BJ (cell line): ENCODE measurements at regions of chrX and their contacts with region 1.

Region 1: GRCh38 chrX:66728818-66729271 is 90.0 kb upstream of the EDA2R start:
- DNase-seq: peak; percentile 11
- H3K4me3 ChIP-seq: peak overlapping the region; percentile 55
- H3K27me3 ChIP-seq: no peaks in the 10 kb centered on the region
- CTCF ChIP-seq: peak; percentile 74

Region 2: GRCh38 chrX:66200855-66201795 is 527.7 kb before region 1 on chrX:
- CTCF ChIA-PET with region 1: interaction called, 80 read pairs
- POLR2A ChIA-PET with region 1: no interaction called
- DNase-seq: no peak
- H3K4me3 ChIP-seq: no peak overlapping the region
- H3K27me3 ChIP-seq: no peaks in the 10 kb centered on the region
- CTCF ChIP-seq: peak; percentile 32; the same call in 1 of the 2 replicates

Region 3: GRCh38 chrX:66717926-66718325 is 10.9 kb before region 1 on chrX:
- CTCF ChIA-PET with region 1: interaction called, 11 read pairs
- POLR2A ChIA-PET with region 1: no interaction called
- DNase-seq: no peak
- H3K4me3 ChIP-seq: no peak overlapping the region
- H3K27me3 ChIP-seq: no peaks in the 10 kb centered on the region
- CTCF ChIP-seq: no peak

Region 4: DNA sequence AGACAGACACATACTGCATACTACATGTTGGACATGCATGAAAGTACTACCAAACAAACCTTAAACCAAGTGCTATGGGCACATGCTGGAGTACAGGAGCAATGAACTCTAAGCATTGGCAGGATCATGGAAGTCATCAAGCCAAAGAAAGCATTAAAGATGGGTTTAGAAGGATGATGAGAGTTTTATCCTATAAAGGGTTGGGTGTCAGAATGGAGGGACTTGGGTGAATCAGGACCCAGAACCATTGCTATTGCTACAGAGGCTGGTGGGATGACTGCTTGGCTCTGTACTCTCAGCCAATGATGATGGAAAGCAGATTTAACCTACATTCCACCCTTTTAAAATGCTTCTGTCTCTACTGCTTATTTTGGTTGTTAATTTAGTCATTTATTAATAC is 143.9 kb after region 1 on chrX:
- CTCF ChIA-PET with region 1: no interaction called
- POLR2A ChIA-PET with region 1: no interaction called
- DNase-seq: no peak
- H3K4me3 ChIP-seq: no peak overlapping the region
- H3K27me3 ChIP-seq: no peaks in the 10 kb centered on the region
- CTCF ChIP-seq: no peak